AG04450 (cell line): ENCODE measurements at regions of chr12 and their contacts with region 1.

Region 1: DNA sequence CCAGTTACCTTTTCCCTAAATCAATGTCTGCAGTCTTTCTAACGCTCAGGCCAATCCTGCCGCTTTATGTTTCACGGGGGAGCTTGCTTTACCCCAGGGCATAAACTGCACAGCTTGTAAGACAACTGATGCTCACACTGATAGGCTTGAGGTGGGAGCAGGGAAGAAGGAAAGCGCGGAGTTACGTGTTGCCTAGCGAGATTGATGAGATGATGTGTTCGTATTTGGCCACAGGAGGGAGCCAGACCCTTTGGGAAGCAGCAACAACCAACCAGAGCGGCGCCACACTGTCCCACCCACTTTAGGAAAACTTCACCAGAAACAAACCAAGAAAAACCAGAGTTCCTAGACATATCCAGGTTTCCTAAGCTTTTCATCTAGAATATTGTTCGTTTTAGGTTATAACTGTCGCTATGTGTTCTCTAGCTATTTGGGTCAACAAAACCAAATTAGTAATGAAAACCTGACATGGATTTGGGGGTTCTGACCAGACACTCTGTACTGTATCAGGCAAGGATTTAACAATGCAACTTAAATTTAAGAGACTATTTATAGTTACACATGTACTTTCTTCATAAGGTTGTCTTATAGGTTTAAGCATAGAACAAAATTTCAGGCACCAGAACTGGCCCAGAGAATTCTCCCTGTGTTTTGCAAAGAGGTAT is 2.4 kb downstream of the IL26 start:
- DNase-seq: peak; percentile 82
- H3K4me3 ChIP-seq: peak overlapping the region; percentile 38
- H3K27ac ChIP-seq: no peak overlapping the region
- H3K27me3 ChIP-seq: no peaks in the 10 kb centered on the region
- CTCF ChIP-seq: peak; percentile 92

Region 2: DNA sequence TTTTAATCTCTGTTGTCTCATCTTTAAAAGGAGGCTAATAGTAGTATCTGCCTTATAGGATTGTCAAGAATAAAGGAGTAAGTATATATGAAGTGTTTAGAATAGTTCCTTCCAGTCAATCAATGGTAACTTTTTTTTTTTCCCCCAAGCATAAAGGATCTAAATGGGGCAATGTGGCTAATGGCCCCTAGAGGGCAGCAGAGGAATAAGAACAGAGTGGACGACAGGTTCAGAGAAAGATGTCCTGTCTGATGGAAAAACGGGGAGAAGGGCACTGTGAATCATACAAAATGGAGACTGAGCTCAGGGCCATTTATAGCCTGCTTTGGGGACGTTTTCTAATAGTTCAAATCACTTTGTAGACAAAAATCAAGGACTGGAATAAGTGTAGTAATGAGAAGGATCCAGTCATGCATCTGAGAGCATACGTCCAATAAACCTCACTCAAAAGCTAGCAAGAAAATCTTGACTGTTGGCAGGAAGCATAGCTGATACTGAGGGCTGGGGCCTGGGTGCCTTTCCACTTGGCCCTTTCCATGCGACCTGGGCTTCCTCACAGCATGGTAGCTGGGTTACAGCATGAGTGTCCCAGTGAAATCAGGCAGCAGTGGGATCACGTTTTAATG is 182.7 kb before region 1 on chr12:
- CTCF ChIA-PET with region 1: interaction called, 20 read pairs
- POLR2A ChIA-PET with region 1: no interaction called
- DNase-seq: peak; percentile 45
- H3K4me3 ChIP-seq: no peak overlapping the region
- H3K27ac ChIP-seq: no peak overlapping the region
- H3K27me3 ChIP-seq: peaks cover 2% of the 10 kb centered on the region
- CTCF ChIP-seq: peak; percentile 93

Region 3: DNA sequence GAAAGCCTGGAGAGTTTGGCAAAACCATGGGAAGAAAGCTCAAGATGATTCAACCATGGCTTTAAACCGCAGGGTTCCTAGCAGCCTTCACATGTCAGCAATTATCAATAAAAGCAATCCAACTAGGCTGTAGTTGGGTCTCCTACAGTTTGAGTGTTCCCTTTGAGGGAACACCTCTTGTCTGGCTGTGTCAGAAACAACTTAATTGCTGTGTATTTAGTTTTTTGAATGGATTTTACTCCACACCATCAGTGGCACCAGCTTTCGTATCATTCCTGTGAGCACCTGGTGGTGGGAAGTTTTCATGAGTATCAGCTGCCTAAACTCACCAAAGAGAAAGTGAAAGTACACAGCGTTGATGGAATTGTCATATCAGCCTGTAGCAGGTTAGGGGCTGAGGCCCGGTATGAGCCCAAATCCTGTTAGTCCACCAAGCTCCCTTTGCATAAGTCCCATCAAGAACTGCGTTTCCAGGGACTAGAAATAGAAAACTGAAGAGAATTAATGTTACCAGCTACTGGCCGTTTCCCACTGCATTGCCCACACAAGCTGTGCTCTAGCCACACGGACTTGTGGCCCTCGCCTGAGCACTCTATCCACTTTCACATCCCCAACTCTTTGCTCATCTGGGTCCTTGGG is 13.3 kb after region 1 on chr12:
- CTCF ChIA-PET with region 1: interaction called, 23 read pairs
- POLR2A ChIA-PET with region 1: no interaction called
- DNase-seq: no peak
- H3K4me3 ChIP-seq: no peak overlapping the region
- H3K27ac ChIP-seq: no peak overlapping the region
- H3K27me3 ChIP-seq: peaks cover 4% of the 10 kb centered on the region
- CTCF ChIP-seq: no peak

Region 4: DNA sequence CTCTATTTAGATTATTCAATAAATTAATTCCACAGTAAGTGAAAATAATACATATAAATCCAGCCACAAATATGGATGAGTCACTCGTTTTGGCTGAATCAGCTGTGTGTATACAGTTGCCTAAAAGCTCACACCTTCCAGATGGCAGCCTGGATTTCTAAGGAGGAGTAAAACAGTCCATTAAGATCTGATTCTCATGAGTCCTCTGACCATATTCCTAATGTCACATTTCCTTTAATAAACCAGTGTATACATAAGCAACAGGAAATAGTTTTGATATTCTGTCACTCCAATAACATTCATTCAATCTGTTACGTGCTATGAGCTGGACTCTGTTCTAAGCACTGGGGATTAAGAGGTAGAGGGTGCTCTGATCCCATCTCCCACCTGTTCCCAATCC is 87.2 kb after region 1 on chr12:
- CTCF ChIA-PET with region 1: interaction called, 193 read pairs
- POLR2A ChIA-PET with region 1: no interaction called
- DNase-seq: peak; percentile 55
- H3K4me3 ChIP-seq: no peak overlapping the region
- H3K27ac ChIP-seq: no peak overlapping the region
- H3K27me3 ChIP-seq: no peaks in the 10 kb centered on the region
- CTCF ChIP-seq: no peak

Region 5: DNA sequence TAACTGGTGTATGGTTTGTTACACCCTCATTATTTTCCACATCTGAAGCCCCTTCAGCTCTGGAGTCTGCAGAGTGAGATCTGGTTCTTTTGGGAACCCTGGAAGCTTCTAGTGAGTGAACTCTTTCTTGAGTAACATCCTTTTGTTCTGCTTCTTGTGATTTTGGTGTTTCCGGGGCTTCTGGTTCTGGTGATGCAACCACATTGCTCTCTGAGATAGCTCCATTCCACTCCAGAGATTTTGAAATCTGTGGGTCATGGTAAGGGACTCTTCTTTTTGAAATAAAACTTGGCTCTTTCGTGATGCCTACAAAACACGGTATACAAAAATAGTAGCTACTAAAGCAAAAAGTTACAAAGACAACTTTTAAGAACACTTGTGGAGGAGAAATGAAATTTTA is 103.5 kb after region 1 on chr12:
- CTCF ChIA-PET with region 1: interaction called, 71 read pairs
- POLR2A ChIA-PET with region 1: no interaction called
- DNase-seq: no peak
- H3K4me3 ChIP-seq: no peak overlapping the region
- H3K27ac ChIP-seq: no peak overlapping the region
- H3K27me3 ChIP-seq: no peaks in the 10 kb centered on the region
- CTCF ChIP-seq: no peak